OCI-LY7 (cell line): ENCODE measurements at regions of chr9 and their contacts with region 1.

Region 1: GRCh38 chr9:36008774-36009300 is 27.9 kb upstream of the RECK start:
- DNase-seq: peak; percentile 77
- H3K4me3 ChIP-seq: no peak overlapping the region
- H3K27ac ChIP-seq: no peak overlapping the region
- H3K4me1 ChIP-seq: peaks cover 10% of the 10 kb centered on the region
- CTCF ChIP-seq: peak; percentile 100

Region 2: DNA sequence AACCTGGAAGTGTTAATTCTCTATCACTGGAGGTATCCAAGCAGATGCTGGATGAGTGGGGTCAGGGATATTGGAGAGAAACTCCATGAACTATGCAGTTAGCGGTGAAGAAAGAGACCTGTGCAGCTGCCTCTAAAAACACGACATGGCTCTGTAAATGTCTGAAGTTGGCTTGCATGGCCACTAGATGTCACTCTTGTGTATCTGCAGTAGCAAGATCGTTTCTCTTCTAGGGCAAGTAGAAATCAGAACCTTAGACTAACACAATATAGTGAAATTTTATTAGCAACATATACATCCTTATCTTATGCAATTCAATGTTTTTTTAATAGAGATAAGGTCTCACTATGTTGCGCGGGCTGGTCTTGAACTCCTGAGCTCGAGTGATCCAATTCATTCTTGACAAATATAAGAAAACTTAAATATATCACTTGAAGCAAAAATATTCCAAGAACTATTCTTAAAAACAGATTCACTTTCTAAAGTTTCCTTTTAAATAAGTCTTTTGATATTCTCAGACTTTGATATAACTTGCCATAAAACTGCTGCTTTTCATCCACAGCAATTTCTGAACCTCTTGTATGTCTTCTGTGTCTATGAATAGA is 53.8 kb before region 1 on chr9:
- CTCF ChIA-PET with region 1: no interaction called
- POLR2A ChIA-PET with region 1: no interaction called
- intact Hi-C with region 1: loop called (anchors 5 kb)
- DNase-seq: peak; percentile 78
- H3K4me3 ChIP-seq: no peak overlapping the region
- H3K27ac ChIP-seq: no peak overlapping the region
- H3K4me1 ChIP-seq: no peaks in the 10 kb centered on the region
- CTCF ChIP-seq: peak; percentile 96

Region 3: DNA sequence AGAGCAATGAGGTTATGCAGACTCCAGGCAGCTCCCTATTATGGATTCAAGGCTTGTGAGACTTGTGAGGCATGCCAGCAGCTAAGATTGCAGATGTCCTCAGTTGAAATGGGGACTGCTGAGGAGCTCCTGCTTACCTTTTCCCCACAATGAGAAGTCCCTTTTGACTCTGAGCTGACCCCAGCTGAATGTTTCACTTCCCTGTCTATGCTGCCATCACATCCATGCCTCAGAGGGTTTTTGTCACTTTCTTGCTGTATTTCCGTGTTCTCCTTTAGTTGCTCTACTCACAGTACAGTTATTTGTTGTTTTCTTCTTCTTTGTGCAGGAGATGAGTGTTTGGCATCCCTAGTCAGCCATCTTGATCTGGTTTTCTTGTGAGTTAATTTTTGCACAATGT is 32.1 kb before region 1 on chr9:
- CTCF ChIA-PET with region 1: interaction called, 3 read pairs
- POLR2A ChIA-PET with region 1: interaction called, 10 read pairs
- intact Hi-C with region 1: no loop called
- DNase-seq: peak; percentile 77
- H3K4me3 ChIP-seq: peak overlapping the region; percentile 19
- H3K27ac ChIP-seq: peak overlapping the region; percentile 38
- H3K4me1 ChIP-seq: peaks cover 27% of the 10 kb centered on the region
- CTCF ChIP-seq: no peak

Region 4: GRCh38 chr9:36053971-36054370 is 45.1 kb after region 1 on chr9:
- CTCF ChIA-PET with region 1: no interaction called
- POLR2A ChIA-PET with region 1: no interaction called
- intact Hi-C with region 1: no loop called
- DNase-seq: no peak
- H3K4me3 ChIP-seq: no peak overlapping the region
- H3K27ac ChIP-seq: no peak overlapping the region
- H3K4me1 ChIP-seq: no peaks in the 10 kb centered on the region
- CTCF ChIP-seq: no peak